Caco-2 (cell line): ENCODE measurements at regions of chr4 and their contacts with region 1.

Region 1: GRCh38 chr4:68693325-68694075 is 23.0 kb upstream of the UGT2B15 start:
- DNase-seq: peak; percentile 81 to 90
- H3K4me3 ChIP-seq: no peak overlapping the region
- H3K4me3 Mint-ChIP-seq: no peak overlapping the region
- H3K27ac Mint-ChIP-seq: peak overlapping the region; percentile 72
- H3K4me1 ChIP-seq: peaks cover 20% of the 10 kb centered on the region
- H3K4me1 Mint-ChIP-seq: peaks cover 6% of the 10 kb centered on the region
- H3K27me3 ChIP-seq: no peaks in the 10 kb centered on the region
- H3K27me3 Mint-ChIP-seq: no peaks in the 10 kb centered on the region
- CTCF ChIP-seq: no peak

Region 2: GRCh38 chr4:67934628-67935027 is 758.9 kb before region 1 on chr4:
- CTCF ChIA-PET with region 1: no interaction called
- POLR2A ChIA-PET with region 1: no interaction called
- intact Hi-C with region 1: no loop called
- DNase-seq: no peak
- H3K4me3 ChIP-seq: no peak overlapping the region
- H3K4me3 Mint-ChIP-seq: no peak overlapping the region
- H3K27ac Mint-ChIP-seq: no peak overlapping the region
- H3K4me1 ChIP-seq: no peaks in the 10 kb centered on the region
- H3K4me1 Mint-ChIP-seq: no peaks in the 10 kb centered on the region
- H3K27me3 ChIP-seq: no peaks in the 10 kb centered on the region
- H3K27me3 Mint-ChIP-seq: no peaks in the 10 kb centered on the region
- CTCF ChIP-seq: no peak

Region 3: DNA sequence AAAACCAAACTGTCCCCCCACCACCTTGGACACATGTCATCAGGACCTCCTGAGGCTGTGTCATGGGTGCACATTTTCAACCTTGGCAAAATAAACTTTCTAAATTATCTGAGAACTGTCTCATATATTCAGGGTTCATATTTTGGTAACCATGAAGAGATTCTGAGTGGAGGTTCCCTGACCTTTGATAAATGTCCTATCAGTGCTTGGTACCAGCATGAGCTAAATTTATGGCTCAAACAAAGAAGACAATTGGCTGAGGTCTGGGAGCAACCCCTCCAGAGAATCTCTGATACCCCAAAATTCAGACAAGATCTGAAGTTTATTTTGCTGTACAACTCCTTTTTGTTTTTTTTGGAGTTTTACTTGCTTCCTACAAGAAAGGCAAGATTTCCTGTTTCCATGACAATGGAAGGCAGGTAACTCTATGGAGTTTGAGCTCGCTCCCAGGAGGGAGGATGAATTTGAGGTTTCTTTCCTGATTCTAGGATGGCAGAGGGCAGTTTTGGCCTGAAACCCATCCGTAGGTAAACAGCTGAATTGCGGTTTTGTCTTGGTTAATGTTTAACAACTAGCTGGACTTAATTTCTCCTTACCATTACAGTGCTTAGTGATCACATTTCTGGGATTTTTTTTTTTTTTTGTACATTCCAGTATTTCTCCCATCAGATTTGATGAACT is 37.6 kb before region 1 on chr4:
- CTCF ChIA-PET with region 1: no interaction called
- POLR2A ChIA-PET with region 1: no interaction called
- intact Hi-C with region 1: loop called (anchors 1 kb)
- DNase-seq: peak; percentile 45 to 48
- H3K4me3 ChIP-seq: no peak overlapping the region
- H3K4me3 Mint-ChIP-seq: peak overlapping the region; percentile 54
- H3K27ac Mint-ChIP-seq: peak overlapping the region; percentile 39
- H3K4me1 ChIP-seq: peaks cover 28% of the 10 kb centered on the region
- H3K4me1 Mint-ChIP-seq: peaks cover 17% of the 10 kb centered on the region
- H3K27me3 ChIP-seq: no peaks in the 10 kb centered on the region
- H3K27me3 Mint-ChIP-seq: no peaks in the 10 kb centered on the region
- CTCF ChIP-seq: no peak

Region 4: DNA sequence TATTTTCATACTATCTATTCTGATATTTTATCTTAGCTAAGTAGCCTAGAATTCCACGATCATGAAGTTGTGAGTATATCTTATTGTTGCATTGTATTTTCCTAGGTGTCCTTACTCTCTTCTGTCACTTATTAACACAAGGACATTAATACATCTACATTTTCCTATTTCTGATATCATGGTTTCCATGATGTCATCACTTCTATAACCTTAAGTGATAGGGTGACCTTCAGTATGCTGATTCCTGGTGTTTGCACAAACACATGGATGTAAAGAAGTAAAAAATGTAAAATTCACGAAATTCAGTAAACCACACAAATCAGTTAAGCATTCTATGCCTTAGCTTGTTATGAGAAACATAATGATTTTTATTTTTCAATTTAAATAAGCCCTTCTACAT is 94.1 kb after region 1 on chr4:
- CTCF ChIA-PET with region 1: no interaction called
- POLR2A ChIA-PET with region 1: no interaction called
- intact Hi-C with region 1: no loop called
- DNase-seq: no peak
- H3K4me3 ChIP-seq: no peak overlapping the region
- H3K4me3 Mint-ChIP-seq: no peak overlapping the region
- H3K27ac Mint-ChIP-seq: no peak overlapping the region
- H3K4me1 ChIP-seq: no peaks in the 10 kb centered on the region
- H3K4me1 Mint-ChIP-seq: no peaks in the 10 kb centered on the region
- H3K27me3 ChIP-seq: no peaks in the 10 kb centered on the region
- H3K27me3 Mint-ChIP-seq: no peaks in the 10 kb centered on the region
- CTCF ChIP-seq: no peak